AG04450 (cell line): ENCODE measurements at regions of chr6 and their contacts with region 1.

Region 1: GRCh38 chr6:89471287-89471867 is 38.4 kb downstream of the ANKRD6 start:
- DNase-seq: no peak
- H3K4me3 ChIP-seq: no peak overlapping the region
- H3K27ac ChIP-seq: no peak overlapping the region
- H3K27me3 ChIP-seq: peaks cover 3% of the 10 kb centered on the region
- CTCF ChIP-seq: no peak

Region 2: DNA sequence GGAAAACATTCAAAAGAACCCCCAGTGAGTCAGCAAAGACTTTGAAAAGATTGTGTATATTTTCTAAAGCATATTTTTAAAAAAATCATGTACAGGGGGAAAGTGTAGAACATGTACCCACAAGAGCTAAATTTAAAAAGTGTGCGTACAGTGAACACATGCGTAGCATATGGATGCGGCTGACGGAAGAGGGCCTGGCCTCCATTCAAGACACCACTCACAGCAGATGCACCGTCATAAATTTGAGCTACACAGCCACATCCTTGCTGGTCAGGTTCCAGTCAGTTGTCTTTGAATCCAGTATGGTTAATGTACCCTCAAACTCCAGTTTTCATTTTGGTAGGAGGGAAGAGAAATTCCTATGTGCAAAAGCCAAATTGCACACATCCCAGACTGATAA is 1478.0 kb before region 1 on chr6:
- CTCF ChIA-PET with region 1: no interaction called
- POLR2A ChIA-PET with region 1: no interaction called
- DNase-seq: no peak
- H3K4me3 ChIP-seq: no peak overlapping the region
- H3K27ac ChIP-seq: no peak overlapping the region
- H3K27me3 ChIP-seq: no peaks in the 10 kb centered on the region
- CTCF ChIP-seq: no peak

Region 3: DNA sequence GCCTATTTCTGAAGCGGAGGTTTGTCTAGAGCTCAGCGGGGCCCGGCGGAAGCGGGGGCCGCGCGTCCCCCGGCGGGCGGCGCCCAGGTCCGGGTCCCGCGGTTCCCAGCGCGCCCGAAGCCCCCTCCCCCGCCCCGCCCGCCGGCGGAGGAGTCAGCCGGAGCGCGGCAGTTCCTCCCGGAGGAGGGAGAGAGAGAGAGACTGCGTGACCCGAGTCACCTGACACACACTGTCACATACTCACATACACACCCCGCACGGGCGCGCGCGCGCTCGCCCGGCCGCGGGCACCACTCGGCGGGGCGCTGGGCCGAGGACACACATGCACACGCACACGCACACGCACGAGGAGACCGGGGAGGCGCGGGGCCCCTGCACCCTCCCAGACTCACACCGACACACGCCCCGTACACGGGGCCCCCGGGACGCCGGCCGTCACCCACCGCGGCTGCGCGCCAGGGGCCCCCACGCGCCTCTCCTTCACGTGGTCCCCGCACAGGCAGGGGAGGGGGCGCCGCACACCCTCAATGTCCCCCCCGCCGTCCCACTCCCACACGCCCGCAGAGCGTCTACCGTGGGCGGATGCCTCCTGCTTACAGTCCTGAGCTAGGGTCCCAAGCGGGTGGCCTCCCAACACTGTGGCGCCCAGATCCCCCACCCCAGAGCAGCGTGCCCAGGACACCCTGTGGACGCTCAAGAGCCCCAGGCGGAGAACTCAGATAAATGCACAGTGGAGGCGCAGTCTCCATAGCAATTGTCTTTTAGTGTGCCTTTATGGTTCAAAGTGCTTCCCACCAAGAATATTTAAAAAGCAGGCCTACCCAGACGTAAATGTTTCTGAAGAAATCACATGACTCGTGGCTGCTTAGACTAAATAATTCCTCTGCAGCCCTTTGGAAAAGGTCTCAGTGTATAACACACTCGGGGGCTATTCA is 59.0 kb before region 1 on chr6 and contains the start of gene RRAGD:
- CTCF ChIA-PET with region 1: interaction called, 17 read pairs
- POLR2A ChIA-PET with region 1: no interaction called
- DNase-seq: no peak
- H3K4me3 ChIP-seq: peak within 1 kb of the TSS; percentile 35; the same call in 1 of the 2 replicates
- H3K27ac ChIP-seq: no peak within 1 kb of the TSS
- H3K27me3 ChIP-seq: peaks cover 55% of the 10 kb centered on the region
- CTCF ChIP-seq: no peak
- polyA plus RNA-seq, gene RRAGD: not detected in 2 replicates

Region 4: GRCh38 chr6:89536231-89536630 is 64.9 kb after region 1 on chr6:
- CTCF ChIA-PET with region 1: no interaction called
- POLR2A ChIA-PET with region 1: no interaction called
- DNase-seq: no peak
- H3K4me3 ChIP-seq: no peak overlapping the region
- H3K27ac ChIP-seq: no peak overlapping the region
- H3K27me3 ChIP-seq: no peaks in the 10 kb centered on the region
- CTCF ChIP-seq: no peak